CD4-positive, alpha-beta memory T cell (primary cell): ENCODE measurements at regions of chr7 and their contacts with region 1.

Region 1: DNA sequence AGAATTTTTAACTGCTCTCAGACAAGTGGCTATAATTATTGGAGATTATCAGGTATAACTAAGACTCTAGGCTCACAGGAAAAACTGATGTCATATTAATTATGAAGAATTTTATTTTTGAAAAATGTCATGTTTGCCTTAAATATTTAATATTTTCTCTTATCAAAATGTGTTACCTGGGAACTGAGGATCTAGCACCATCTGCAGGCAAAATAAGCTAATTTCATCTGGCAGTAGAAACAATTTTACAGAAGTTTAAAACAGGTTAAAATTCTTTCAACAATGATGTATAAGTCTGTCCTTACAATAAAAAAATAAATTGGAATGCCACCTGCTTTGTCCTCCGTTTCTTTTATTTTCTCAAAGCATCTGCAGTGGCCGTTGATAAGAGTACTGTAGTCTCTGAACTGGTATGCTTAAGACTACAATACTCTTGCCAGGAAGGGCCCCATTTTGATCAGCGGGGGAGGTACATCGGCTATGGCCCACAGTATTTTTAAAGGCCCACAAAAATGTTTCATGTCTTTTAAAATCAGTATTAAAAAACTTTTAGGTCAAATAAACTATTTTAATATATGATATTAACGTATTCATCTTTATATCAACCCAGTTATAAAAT is 81.3 kb downstream of the VWDE start:
- DNase-seq: peak in 4 of 5 donors; percentile 38 to 48 (median 42)
- H3K4me3 ChIP-seq: no peak overlapping the region
- H3K4me3 Mint-ChIP-seq: no peak overlapping the region
- H3K27ac ChIP-seq: no peak overlapping the region
- H3K27ac Mint-ChIP-seq: peak overlapping the region in 1 of 7 donors; percentile 19
- H3K4me1 ChIP-seq: no peaks in the 10 kb centered on the region
- H3K4me1 Mint-ChIP-seq: no peaks in the 10 kb centered on the region
- H3K27me3 ChIP-seq: no peaks in the 10 kb centered on the region
- H3K27me3 Mint-ChIP-seq: no peaks in the 10 kb centered on the region

Region 2: DNA sequence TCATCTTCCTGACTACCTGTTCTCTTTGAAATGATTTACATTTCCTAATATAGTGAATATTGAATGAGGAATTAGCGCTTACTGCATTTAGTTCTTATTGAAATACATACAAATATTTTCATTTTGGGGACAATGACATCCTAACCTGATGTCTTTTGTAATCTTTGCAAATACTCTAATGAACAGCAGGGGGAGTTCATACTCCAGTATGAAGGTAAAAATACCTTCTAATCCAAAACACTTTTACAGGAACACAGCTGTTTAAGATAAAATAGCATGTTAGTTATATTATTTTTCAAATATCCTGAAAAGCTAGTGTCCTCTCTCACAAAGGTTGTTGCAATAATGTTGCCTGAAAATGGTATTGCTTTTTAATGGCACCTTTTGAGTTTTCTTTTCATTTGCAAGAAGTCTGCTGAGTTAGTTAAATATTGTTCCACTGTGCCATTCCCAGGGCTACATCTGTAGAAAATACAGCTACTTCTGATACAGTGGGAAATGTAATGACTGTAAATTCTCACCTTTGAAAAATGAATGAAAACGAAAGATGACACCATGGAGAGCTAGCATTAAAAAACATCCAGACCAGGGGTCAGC is 948.7 kb before region 1 on chr7:
- CTCF ChIA-PET with region 1: no interaction called
- POLR2A ChIA-PET with region 1: no interaction called
- intact Hi-C with region 1: loop called (anchors 5 kb)
- DNase-seq: no peak
- H3K4me3 ChIP-seq: no peak overlapping the region
- H3K4me3 Mint-ChIP-seq: no peak overlapping the region
- H3K27ac ChIP-seq: no peak overlapping the region
- H3K27ac Mint-ChIP-seq: no peak overlapping the region
- H3K4me1 ChIP-seq: no peaks in the 10 kb centered on the region
- H3K4me1 Mint-ChIP-seq: no peaks in the 10 kb centered on the region
- H3K27me3 ChIP-seq: no peaks in the 10 kb centered on the region
- H3K27me3 Mint-ChIP-seq: peaks cover 0 to 1% of the 10 kb centered on the region in 2 donors

Region 3: GRCh38 chr7:11427686-11428273 is 894.6 kb before region 1 on chr7:
- CTCF ChIA-PET with region 1: no interaction called
- POLR2A ChIA-PET with region 1: no interaction called
- intact Hi-C with region 1: loop called (anchors 2 kb)
- DNase-seq: peak in 3 of 5 donors; percentile 0 to 7 (median 1)
- H3K4me3 ChIP-seq: no peak overlapping the region
- H3K4me3 Mint-ChIP-seq: no peak overlapping the region
- H3K27ac ChIP-seq: no peak overlapping the region
- H3K27ac Mint-ChIP-seq: no peak overlapping the region
- H3K4me1 ChIP-seq: no peaks in the 10 kb centered on the region
- H3K4me1 Mint-ChIP-seq: no peaks in the 10 kb centered on the region
- H3K27me3 ChIP-seq: no peaks in the 10 kb centered on the region
- H3K27me3 Mint-ChIP-seq: no peaks in the 10 kb centered on the region

Region 4: DNA sequence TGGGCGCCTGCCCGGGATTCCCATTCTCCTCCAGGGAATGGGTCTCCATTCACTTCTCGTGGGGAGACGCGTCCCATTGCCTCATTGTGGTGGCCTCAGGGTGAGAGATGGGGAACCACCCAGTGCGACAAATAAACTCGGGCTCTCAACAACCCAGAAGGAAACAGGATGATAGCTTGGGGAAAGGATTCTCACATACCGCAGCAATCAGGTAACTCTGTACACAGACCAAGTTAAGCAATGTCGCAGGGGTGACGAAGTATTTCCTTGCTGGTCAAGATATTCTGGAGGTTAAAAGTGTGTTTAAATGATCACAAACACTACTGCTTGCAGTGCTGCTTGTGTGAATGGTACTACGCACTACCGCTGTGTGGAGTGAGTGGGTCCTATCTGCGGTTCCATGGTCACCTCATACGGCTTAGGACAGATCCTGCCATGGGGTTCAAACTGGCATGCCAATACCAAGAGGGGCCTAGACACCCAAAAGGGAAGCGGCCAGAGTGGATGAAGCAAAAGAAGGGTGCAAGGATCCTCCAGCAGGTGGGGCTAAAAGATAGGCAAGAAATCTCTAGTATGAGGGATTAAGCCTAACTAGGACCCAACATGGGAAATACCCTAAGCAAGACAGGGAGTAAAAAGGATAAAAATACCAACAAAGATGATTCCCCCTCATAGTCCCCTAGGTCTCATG is 255.1 kb before region 1 on chr7:
- CTCF ChIA-PET with region 1: interaction called, 63 read pairs
- POLR2A ChIA-PET with region 1: no interaction called
- intact Hi-C with region 1: loop called (anchors 1 kb)
- DNase-seq: peak; percentile 58 to 66 (median 63)
- H3K4me3 ChIP-seq: no peak overlapping the region
- H3K4me3 Mint-ChIP-seq: no peak overlapping the region
- H3K27ac ChIP-seq: no peak overlapping the region
- H3K27ac Mint-ChIP-seq: peak overlapping the region in 1 of 7 donors; percentile 2
- H3K4me1 ChIP-seq: no peaks in the 10 kb centered on the region
- H3K4me1 Mint-ChIP-seq: peaks cover 0 to 5% (median 3%) of the 10 kb centered on the region in 4 donors
- H3K27me3 ChIP-seq: no peaks in the 10 kb centered on the region
- H3K27me3 Mint-ChIP-seq: no peaks in the 10 kb centered on the region

Region 5: GRCh38 chr7:12111422-12112405 is 210.7 kb before region 1 on chr7:
- CTCF ChIA-PET with region 1: interaction called, 3 read pairs
- POLR2A ChIA-PET with region 1: no interaction called
- intact Hi-C with region 1: loop called (anchors 1 kb)
- DNase-seq: peak in 4 of 5 donors; percentile 12 to 22 (median 19)
- H3K4me3 ChIP-seq: no peak overlapping the region
- H3K4me3 Mint-ChIP-seq: peak overlapping the region; percentile 74 to 85 (median 79)
- H3K27ac ChIP-seq: no peak overlapping the region
- H3K27ac Mint-ChIP-seq: no peak overlapping the region
- H3K4me1 ChIP-seq: peaks cover 6% of the 10 kb centered on the region
- H3K4me1 Mint-ChIP-seq: peaks cover 7 to 18% (median 13%) of the 10 kb centered on the region in 4 donors
- H3K27me3 ChIP-seq: peaks cover 9% of the 10 kb centered on the region
- H3K27me3 Mint-ChIP-seq: peaks cover 25 to 26% of the 10 kb centered on the region in 2 donors

Region 6: DNA sequence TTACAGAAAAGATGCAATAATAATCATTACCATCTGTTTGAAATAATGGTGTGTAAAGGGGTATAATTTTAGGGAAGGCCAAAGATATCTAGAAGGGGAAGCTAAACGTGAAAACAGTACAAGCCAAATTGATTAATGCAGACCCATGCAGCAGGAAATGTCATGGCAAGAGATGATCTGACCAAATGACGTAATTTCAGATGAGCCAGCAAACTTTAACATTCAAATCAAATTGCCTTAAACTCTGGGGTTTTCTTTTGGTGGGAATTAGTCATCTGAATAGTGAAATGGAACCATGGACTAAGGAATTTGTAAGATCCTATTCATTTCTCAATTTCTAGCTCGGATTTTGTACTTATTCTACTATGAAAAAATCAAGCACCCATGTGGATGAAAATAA is 226.7 kb after region 1 on chr7:
- CTCF ChIA-PET with region 1: no interaction called
- POLR2A ChIA-PET with region 1: no interaction called
- intact Hi-C with region 1: no loop called
- DNase-seq: no peak
- H3K4me3 ChIP-seq: no peak overlapping the region
- H3K4me3 Mint-ChIP-seq: no peak overlapping the region
- H3K27ac ChIP-seq: no peak overlapping the region
- H3K27ac Mint-ChIP-seq: no peak overlapping the region
- H3K4me1 ChIP-seq: no peaks in the 10 kb centered on the region
- H3K4me1 Mint-ChIP-seq: no peaks in the 10 kb centered on the region
- H3K27me3 ChIP-seq: no peaks in the 10 kb centered on the region
- H3K27me3 Mint-ChIP-seq: peaks cover 2 to 5% of the 10 kb centered on the region in 2 donors

Region 7: GRCh38 chr7:13017333-13017853 is 695.0 kb after region 1 on chr7:
- CTCF ChIA-PET with region 1: no interaction called
- POLR2A ChIA-PET with region 1: no interaction called
- intact Hi-C with region 1: no loop called
- DNase-seq: no peak
- H3K4me3 ChIP-seq: no peak overlapping the region
- H3K4me3 Mint-ChIP-seq: no peak overlapping the region
- H3K27ac ChIP-seq: no peak overlapping the region
- H3K27ac Mint-ChIP-seq: no peak overlapping the region
- H3K4me1 ChIP-seq: no peaks in the 10 kb centered on the region
- H3K4me1 Mint-ChIP-seq: no peaks in the 10 kb centered on the region
- H3K27me3 ChIP-seq: no peaks in the 10 kb centered on the region
- H3K27me3 Mint-ChIP-seq: peaks cover 3 to 4% of the 10 kb centered on the region in 2 donors